PC-3 (cell line): ENCODE measurements at regions of chr2 and their contacts with region 1.

Region 1: DNA sequence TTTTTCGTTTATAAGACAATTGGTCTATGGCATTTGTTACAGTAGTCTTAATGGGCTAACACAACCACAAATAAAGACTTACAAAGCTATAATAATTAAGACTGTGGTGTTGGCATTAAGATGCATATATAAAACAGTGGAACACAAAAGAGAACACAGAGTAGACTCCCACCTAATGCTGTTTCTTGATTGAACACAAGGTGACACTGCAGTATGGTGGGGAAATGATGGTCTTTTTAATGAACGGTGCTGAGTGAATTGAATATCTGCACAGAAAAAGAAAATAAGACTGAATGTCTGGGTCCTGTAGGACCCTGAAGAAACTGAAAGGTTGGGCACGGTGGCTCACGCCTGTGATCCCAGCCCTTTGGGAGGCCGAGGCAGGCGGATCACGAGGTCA is 1136.6 kb upstream of the NXPH2 start:
- DNase-seq: no peak
- ATAC-seq: no peak
- H3K4me3 ChIP-seq: no peak overlapping the region
- H3K27ac ChIP-seq: no peak overlapping the region
- H3K4me1 ChIP-seq: no peaks in the 10 kb centered on the region
- H3K27me3 ChIP-seq: no peaks in the 10 kb centered on the region
- CTCF ChIP-seq: peak; percentile 21; the same call in 1 of the 2 replicates

Region 2: GRCh38 chr2:139850254-139850890 is 66.5 kb before region 1 on chr2:
- CTCF ChIA-PET with region 1: no interaction called
- POLR2A ChIA-PET with region 1: no interaction called
- intact Hi-C with region 1: loop called (anchors 5 kb)
- DNase-seq: no peak
- ATAC-seq: no peak
- H3K4me3 ChIP-seq: no peak overlapping the region
- H3K27ac ChIP-seq: no peak overlapping the region
- H3K4me1 ChIP-seq: no peaks in the 10 kb centered on the region
- H3K27me3 ChIP-seq: no peaks in the 10 kb centered on the region
- CTCF ChIP-seq: no peak

Region 3: GRCh38 chr2:139876321-139876720 is 40.5 kb before region 1 on chr2:
- CTCF ChIA-PET with region 1: no interaction called
- POLR2A ChIA-PET with region 1: no interaction called
- intact Hi-C with region 1: no loop called
- DNase-seq: peak; percentile 14
- ATAC-seq: no peak
- H3K4me3 ChIP-seq: no peak overlapping the region
- H3K27ac ChIP-seq: peak overlapping the region; percentile 27
- H3K4me1 ChIP-seq: no peaks in the 10 kb centered on the region
- H3K27me3 ChIP-seq: no peaks in the 10 kb centered on the region
- CTCF ChIP-seq: no peak

Region 4: GRCh38 chr2:139940686-139941085 is 23.9 kb after region 1 on chr2:
- CTCF ChIA-PET with region 1: no interaction called
- POLR2A ChIA-PET with region 1: no interaction called
- intact Hi-C with region 1: no loop called
- DNase-seq: no peak
- ATAC-seq: no peak
- H3K4me3 ChIP-seq: no peak overlapping the region
- H3K27ac ChIP-seq: no peak overlapping the region
- H3K4me1 ChIP-seq: no peaks in the 10 kb centered on the region
- H3K27me3 ChIP-seq: no peaks in the 10 kb centered on the region
- CTCF ChIP-seq: no peak

Region 5: GRCh38 chr2:140063356-140063755 is 146.5 kb after region 1 on chr2:
- CTCF ChIA-PET with region 1: no interaction called
- POLR2A ChIA-PET with region 1: no interaction called
- intact Hi-C with region 1: no loop called
- DNase-seq: no peak
- ATAC-seq: no peak
- H3K4me3 ChIP-seq: no peak overlapping the region
- H3K27ac ChIP-seq: no peak overlapping the region
- H3K4me1 ChIP-seq: no peaks in the 10 kb centered on the region
- H3K27me3 ChIP-seq: no peaks in the 10 kb centered on the region
- CTCF ChIP-seq: no peak